ENCODE measurements at regions of chr3 and their contacts with region 1.

Region 1: DNA sequence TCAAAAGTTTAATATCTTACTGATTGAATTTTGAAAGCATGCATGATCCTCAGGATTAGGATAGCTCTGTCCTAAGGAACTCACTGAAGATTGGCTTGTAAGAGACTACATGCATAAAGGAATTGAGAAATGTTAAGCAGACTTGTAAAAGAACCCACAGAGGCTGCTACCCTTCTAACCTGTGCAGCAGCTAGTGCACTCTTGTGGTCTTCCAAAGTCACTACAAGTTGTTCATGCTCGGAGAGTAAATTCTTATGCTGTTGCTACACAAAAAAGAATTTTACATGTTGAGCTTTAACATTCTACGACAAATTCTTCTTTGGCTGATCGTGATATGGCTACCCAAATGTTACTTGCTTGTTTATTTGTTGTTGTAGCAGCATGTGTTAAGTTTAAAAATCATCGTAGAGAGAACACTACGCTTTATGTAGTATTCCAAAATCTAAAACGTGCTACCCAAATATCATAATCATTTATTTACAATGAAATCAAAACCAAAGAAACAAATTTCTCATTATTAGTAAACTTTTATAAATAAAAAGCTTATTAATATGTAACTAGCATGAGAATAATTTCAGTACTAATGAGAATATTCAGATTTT is 55.0 kb downstream of the GOLIM4 start:
- DNase-seq: no peak
- ATAC-seq: no peak
- H3K4me3 ChIP-seq: no peak overlapping the region
- H3K4me3 Mint-ChIP-seq: no peak overlapping the region
- H3K27ac ChIP-seq: no peak overlapping the region
- H3K27ac Mint-ChIP-seq: no peak overlapping the region
- H3K4me1 ChIP-seq: no peaks in the 10 kb centered on the region
- H3K4me1 Mint-ChIP-seq: no peaks in the 10 kb centered on the region
- H3K27me3 ChIP-seq: no peaks in the 10 kb centered on the region
- H3K27me3 Mint-ChIP-seq: peaks cover 0 to 3% (median 0%) of the 10 kb centered on the region in 5 donors

Region 2: DNA sequence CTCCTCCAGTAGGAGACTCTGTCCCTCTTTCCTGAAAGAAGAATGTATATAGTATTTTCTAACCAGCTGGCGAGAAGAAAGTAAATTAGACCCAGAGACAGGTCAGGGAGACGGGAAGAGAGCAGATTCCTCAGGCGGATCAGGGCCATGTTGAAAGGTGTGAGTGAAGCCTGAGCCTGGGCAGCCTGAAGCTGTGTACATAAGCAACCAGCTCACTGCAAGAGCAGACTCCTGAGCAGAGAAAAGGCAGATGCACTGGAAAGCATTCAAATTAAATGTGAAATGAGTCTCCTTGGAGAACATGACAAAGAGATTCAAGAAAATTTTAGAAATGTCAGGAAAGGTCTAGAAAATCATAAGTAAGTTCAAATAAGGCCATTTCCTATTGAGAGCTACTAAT is 110.7 kb before region 1 on chr3:
- CTCF ChIA-PET with region 1: no interaction called
- POLR2A ChIA-PET with region 1: no interaction called
- intact Hi-C with region 1: loop called in 1 of 2 experiments (anchors 5 kb)
- DNase-seq: no peak
- ATAC-seq: no peak
- H3K4me3 ChIP-seq: no peak overlapping the region
- H3K4me3 Mint-ChIP-seq: no peak overlapping the region
- H3K27ac ChIP-seq: no peak overlapping the region
- H3K27ac Mint-ChIP-seq: no peak overlapping the region
- H3K4me1 ChIP-seq: no peaks in the 10 kb centered on the region
- H3K4me1 Mint-ChIP-seq: no peaks in the 10 kb centered on the region
- H3K27me3 ChIP-seq: no peaks in the 10 kb centered on the region
- H3K27me3 Mint-ChIP-seq: peaks cover 0 to 11% (median 3%) of the 10 kb centered on the region in 5 donors

Region 3: DNA sequence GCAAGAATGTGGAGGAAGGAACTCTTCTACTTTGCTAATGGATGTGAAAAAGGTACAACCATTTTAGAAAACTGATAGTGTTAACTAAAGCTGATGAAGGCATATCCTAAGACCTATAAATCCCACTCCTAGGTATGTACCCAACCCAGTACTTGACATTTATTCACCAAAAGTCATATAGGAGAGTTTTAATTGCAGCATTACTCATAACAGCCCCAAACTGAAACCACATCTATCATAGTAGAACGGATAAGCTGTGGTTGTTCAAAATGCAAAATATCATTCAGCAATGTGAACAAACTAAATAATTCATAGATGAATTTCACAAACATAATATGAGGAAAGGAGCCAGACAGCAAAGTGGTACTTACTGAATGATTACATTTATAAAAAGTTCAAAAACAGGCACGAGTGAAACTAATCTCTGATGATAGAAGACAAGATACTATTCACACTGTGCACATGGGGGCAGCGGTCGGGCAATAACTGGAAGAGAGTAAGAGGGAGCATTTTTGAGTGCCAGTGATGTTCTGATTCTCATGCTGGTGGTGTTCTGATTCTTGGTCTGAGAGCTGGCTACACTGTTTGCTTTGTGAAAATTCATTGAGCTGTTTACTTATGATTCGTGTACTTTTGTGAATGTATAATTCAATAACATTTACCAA is 20.8 kb after region 1 on chr3:
- CTCF ChIA-PET with region 1: no interaction called
- POLR2A ChIA-PET with region 1: no interaction called
- intact Hi-C with region 1: no loop called
- DNase-seq: no peak
- ATAC-seq: peak; percentile 49
- H3K4me3 ChIP-seq: no peak overlapping the region
- H3K4me3 Mint-ChIP-seq: peak overlapping the region in 1 of 10 donors; percentile 8
- H3K27ac ChIP-seq: no peak overlapping the region
- H3K27ac Mint-ChIP-seq: peak overlapping the region in 1 of 9 donors; percentile 4
- H3K4me1 ChIP-seq: no peaks in the 10 kb centered on the region
- H3K4me1 Mint-ChIP-seq: peaks cover 0 to 12% (median 0%) of the 10 kb centered on the region in 7 donors
- H3K27me3 ChIP-seq: no peaks in the 10 kb centered on the region
- H3K27me3 Mint-ChIP-seq: peaks cover 0 to 9% (median 6%) of the 10 kb centered on the region in 5 donors

Measured in naive thymus-derived CD4-positive, alpha-beta T cell (primary cell).